A549 (cell line): ENCODE measurements at regions of chr2 and their contacts with region 1.

Region 1: GRCh38 chr2:149017116-149017985 is 21.1 kb upstream of the LYPD6B start:
- DNase-seq: peak; percentile 49 to 68
- ATAC-seq: peak; percentile 84 to 94; a peak in 5 of 6 replicates
- H3K4me3 ChIP-seq: no peak overlapping the region
- H3K27ac ChIP-seq: no peak overlapping the region
- H3K4me1 ChIP-seq: no peaks in the 10 kb centered on the region
- CTCF ChIP-seq: peak; percentile 89
- EP300 ChIP-seq: no peak
- POLR2A ChIP-seq: no peak
- RAD21 ChIP-seq: peak; percentile 74 to 77

Region 2: GRCh38 chr2:149006883-149007540 is 10.3 kb before region 1 on chr2:
- CTCF ChIA-PET with region 1: interaction called, 25 read pairs
- POLR2A ChIA-PET with region 1: no interaction called
- DNase-seq: no peak
- ATAC-seq: no peak
- H3K4me3 ChIP-seq: no peak overlapping the region
- H3K27ac ChIP-seq: no peak overlapping the region
- H3K4me1 ChIP-seq: no peaks in the 10 kb centered on the region
- CTCF ChIP-seq: no peak
- EP300 ChIP-seq: no peak
- POLR2A ChIP-seq: no peak
- RAD21 ChIP-seq: no peak

Region 3: DNA sequence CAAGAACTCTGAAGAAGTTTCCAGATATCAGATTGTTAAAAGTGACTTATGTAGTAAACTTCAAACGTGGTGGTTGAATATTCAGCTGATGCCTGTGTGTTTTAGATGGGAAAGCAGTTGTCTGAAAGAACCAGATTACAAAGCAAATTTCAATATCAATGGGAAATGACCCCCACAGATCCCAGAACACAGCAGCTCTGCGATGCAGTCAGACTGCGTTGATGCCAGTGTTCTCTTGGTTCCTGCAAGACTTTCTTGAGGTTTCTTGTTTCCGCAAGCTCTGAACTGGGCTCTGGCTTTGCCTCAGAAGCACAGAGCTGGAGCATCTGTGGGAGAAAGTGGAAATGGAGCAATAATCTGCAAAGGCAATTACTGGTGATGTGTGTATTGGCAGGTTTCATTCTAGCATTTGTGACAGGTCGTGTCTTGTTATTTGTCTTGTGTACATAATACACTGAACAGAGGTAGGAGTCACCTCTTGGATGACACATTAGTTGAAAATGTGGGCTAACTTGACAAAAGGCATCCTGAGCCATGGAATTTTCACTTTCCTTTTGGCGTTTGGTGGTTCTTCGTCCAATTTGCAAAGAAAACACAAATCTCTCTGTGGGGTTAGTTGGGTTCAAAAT is 10.4 kb after region 1 on chr2:
- CTCF ChIA-PET with region 1: interaction called, 19 read pairs
- POLR2A ChIA-PET with region 1: no interaction called
- DNase-seq: no peak
- ATAC-seq: no peak
- H3K4me3 ChIP-seq: no peak overlapping the region
- H3K27ac ChIP-seq: no peak overlapping the region
- H3K4me1 ChIP-seq: no peaks in the 10 kb centered on the region
- CTCF ChIP-seq: no peak
- EP300 ChIP-seq: no peak
- POLR2A ChIP-seq: no peak
- RAD21 ChIP-seq: no peak

Region 4: DNA sequence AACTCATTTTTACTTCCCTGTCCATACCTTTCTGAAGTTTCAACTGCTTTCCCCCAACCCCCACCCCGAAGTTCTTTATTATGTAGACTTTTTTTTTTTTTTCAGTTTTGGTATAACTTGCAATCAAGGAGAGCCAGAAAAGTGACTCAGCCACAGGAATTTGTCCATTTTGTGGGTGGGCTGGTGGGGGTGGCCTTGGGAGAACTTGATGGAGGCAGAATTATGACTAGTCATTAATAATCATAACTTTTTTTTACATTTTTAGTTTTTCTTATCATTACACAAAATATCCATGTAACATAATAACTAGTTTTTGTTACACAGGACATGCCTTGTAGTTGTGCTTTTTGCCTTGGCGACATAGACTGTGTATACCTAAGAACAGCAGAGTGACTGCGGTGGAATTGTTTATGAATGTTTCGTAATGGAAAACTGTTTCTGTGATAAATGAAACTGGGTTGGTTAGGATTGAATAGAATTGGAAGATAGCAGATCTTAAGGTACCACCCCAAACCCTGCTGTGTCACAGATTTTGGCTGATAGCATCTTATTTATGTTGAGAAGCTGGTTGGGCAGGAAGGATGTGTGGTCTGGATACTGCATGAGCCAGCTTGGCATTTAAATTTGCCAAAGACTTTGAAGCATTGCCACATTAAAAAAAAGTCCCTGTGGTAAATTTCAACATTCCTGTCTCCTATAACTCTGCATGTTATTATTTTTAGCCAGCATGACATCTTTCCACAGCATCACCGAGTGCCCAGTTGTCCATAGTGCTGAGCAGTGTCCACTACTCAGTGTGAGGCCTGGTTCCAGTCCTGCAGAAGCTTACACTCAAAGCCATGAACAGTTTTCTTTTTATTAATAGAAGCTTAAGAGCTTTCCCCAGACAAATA is 51.9 kb after region 1 on chr2:
- CTCF ChIA-PET with region 1: no interaction called
- POLR2A ChIA-PET with region 1: no interaction called
- DNase-seq: no peak
- ATAC-seq: no peak
- H3K4me3 ChIP-seq: no peak overlapping the region
- H3K27ac ChIP-seq: no peak overlapping the region
- H3K4me1 ChIP-seq: no peaks in the 10 kb centered on the region
- CTCF ChIP-seq: no peak
- EP300 ChIP-seq: no peak
- POLR2A ChIP-seq: no peak
- RAD21 ChIP-seq: no peak

Region 5: GRCh38 chr2:149561309-149561926 is 544.1 kb after region 1 on chr2:
- CTCF ChIA-PET with region 1: interaction called, 88 read pairs
- POLR2A ChIA-PET with region 1: no interaction called
- DNase-seq: peak in 1 of 2 experiments; percentile 19
- ATAC-seq: peak in 1 of 2 experiments; percentile 44; a peak in 3 of 6 replicates
- H3K4me3 ChIP-seq: no peak overlapping the region
- H3K27ac ChIP-seq: no peak overlapping the region
- H3K4me1 ChIP-seq: peaks cover 4% of the 10 kb centered on the region; the same call in 1 of the 3 replicates
- CTCF ChIP-seq: peak; percentile 93
- EP300 ChIP-seq: no peak
- POLR2A ChIP-seq: no peak
- RAD21 ChIP-seq: peak; percentile 82 to 84